Colonic mucosa (tissue), 4 donors: ENCODE measurements at regions of chr15 and their contacts with region 1.

Region 1: DNA sequence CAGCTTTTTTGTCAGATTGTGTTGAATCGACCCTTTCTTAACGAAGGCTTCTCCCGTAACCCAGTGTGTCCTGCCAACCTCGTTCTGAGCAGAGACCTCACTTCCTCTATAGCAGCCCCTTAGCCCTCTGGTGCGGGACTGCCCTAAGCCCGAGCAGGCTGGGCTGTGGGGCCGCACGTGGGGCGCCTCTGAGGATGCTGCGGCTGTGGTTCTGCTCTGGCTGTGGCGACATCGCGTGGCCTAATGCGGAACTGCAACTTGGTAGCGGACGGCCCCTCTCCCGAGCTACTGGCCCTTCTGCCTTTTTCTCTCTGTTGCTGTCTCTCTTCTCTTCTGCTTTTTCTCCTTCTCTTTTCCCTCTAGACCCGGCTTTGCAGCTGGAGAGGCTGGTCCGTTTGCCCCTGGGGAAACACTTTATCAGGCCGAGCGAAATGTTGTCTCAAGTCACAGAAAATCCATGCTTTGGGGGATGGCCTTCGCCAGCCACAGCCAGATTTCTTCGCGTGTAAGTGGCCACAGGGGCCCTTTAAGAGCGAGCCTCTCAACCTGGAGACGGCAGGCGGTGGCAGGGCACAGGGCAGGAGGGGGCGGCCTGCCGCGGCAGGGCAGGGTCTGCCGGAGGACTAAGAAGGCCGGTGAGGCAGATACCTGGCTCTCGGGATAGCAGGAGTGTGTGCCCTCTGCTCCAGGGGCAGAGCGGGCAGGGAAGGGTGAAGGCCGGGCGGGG is 19.4 kb upstream of the KIF23 start:
- DNase-seq: peak; percentile 82
- H3K4me3 ChIP-seq: no peak overlapping the region
- H3K27ac ChIP-seq: no peak overlapping the region
- H3K4me1 ChIP-seq: no peaks in the 10 kb centered on the region
- H3K27me3 ChIP-seq: no peaks in the 10 kb centered on the region
- CTCF ChIP-seq: peak; percentile 93

Region 2: GRCh38 chr15:69265347-69265955 is 129.3 kb before region 1 on chr15:
- intact Hi-C with region 1: loop called (anchors 10 kb)
- DNase-seq: no peak
- H3K4me3 ChIP-seq: no peak overlapping the region
- H3K27ac ChIP-seq: no peak overlapping the region
- H3K4me1 ChIP-seq: no peaks in the 10 kb centered on the region
- H3K27me3 ChIP-seq: no peaks in the 10 kb centered on the region
- CTCF ChIP-seq: peak; percentile 52

Region 3: DNA sequence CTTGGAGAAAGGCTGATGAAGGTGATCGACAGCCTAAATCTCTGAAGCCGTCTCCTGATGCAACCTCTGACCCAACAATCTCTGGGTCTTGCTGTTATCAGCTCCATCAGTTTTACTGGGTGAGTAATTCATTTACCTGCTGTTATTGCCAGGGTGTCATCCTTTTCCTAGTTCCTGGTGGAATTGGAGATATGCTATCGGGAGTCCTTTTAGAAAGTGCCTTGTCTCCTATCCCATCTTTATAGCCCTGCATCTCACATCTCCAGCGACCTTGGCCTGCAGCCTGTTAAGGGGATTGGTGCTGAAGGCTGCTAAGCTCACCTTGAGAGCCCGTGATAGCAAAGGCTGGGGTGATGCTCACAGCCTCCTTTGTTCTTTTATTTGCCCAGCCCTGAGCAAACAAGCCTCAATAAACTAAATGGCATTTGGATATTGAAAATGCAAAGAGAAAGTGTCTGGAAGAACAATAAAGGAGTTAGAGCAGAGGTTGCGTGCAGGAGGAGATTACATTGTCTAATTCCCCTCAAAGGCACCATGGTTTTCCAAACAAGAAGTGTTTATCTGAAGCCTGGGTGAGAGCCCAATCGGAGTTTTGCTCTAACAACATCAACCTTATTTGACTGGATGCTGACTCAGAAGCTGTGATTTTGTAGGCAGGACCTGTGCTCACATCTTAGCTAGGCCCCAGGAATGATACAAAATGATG is 159.7 kb after region 1 on chr15:
- intact Hi-C with region 1: no loop called
- DNase-seq: peak; percentile 84
- H3K4me3 ChIP-seq: no peak overlapping the region
- H3K27ac ChIP-seq: peak overlapping the region; percentile 24
- H3K4me1 ChIP-seq: peaks cover 4% of the 10 kb centered on the region
- H3K27me3 ChIP-seq: no peaks in the 10 kb centered on the region
- CTCF ChIP-seq: no peak